ENCODE measurements at regions of chr12 and their contacts with region 1.

Region 1: DNA sequence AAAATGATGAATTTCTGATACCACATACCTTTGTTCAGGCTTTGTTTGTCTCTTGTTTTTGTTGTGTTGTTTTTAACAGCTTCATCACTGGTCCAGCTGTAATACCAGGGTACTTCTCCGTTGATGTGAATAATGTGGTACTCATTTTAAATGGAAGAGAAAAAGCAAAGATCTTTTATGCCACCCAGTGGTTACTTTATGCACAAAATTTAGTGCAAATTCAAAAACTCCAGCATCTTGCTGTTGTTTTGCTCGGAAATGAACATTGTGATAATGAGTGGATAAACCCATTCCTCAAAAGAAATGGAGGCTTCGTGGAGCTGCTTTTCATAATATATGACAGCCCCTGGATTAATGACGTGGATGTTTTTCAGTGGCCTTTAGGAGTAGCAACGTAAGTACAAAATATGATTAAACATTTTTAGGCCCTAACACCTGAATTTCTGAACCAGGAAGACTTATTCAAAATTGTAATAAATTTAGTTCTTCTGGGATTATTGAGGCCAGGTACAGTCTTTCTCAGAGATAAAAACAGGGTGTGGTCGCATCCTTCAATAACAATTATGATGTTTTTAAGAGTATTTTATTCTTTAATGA is 22.4 kb downstream of the RXYLT1 start:
- DNase-seq: no peak
- ATAC-seq: no peak
- H3K4me3 Mint-ChIP-seq: no peak overlapping the region
- H3K27ac Mint-ChIP-seq: no peak overlapping the region
- H3K4me1 Mint-ChIP-seq: no peaks in the 10 kb centered on the region
- H3K27me3 Mint-ChIP-seq: no peaks in the 10 kb centered on the region

Region 2: GRCh38 chr12:63420206-63420644 is 381.9 kb before region 1 on chr12:
- CTCF ChIA-PET with region 1: interaction called, 28 read pairs
- POLR2A ChIA-PET with region 1: no interaction called
- DNase-seq: peak; percentile 62
- ATAC-seq: peak; percentile 60
- H3K4me3 Mint-ChIP-seq: no peak overlapping the region
- H3K27ac Mint-ChIP-seq: no peak overlapping the region
- H3K4me1 Mint-ChIP-seq: no peaks in the 10 kb centered on the region
- H3K27me3 Mint-ChIP-seq: no peaks in the 10 kb centered on the region

Region 3: GRCh38 chr12:63814146-63814772 is 12.1 kb after region 1 on chr12:
- CTCF ChIA-PET with region 1: interaction called, 18 read pairs
- POLR2A ChIA-PET with region 1: no interaction called
- DNase-seq: no peak
- ATAC-seq: peak; percentile 27
- H3K4me3 Mint-ChIP-seq: no peak overlapping the region
- H3K27ac Mint-ChIP-seq: no peak overlapping the region
- H3K4me1 Mint-ChIP-seq: peaks cover 17% of the 10 kb centered on the region
- H3K27me3 Mint-ChIP-seq: no peaks in the 10 kb centered on the region